Naive thymus-derived CD4-positive, alpha-beta T cell (primary cell): ENCODE measurements at regions of chr6 and their contacts with region 1.

Region 1: GRCh38 chr6:109187399-109188114 is 92.2 kb downstream of the CEP57L1 start:
- DNase-seq: peak; percentile 19 to 68 (median 56)
- ATAC-seq: peak; percentile 91
- H3K4me3 ChIP-seq: no peak overlapping the region
- H3K4me3 Mint-ChIP-seq: no peak overlapping the region
- H3K27ac ChIP-seq: no peak overlapping the region
- H3K27ac Mint-ChIP-seq: no peak overlapping the region
- H3K4me1 ChIP-seq: no peaks in the 10 kb centered on the region
- H3K4me1 Mint-ChIP-seq: peaks cover 0 to 4% (median 0%) of the 10 kb centered on the region in 7 donors
- H3K27me3 ChIP-seq: peaks cover 0 to 3% of the 10 kb centered on the region in 2 donors
- H3K27me3 Mint-ChIP-seq: peaks cover 1 to 45% (median 8%) of the 10 kb centered on the region in 5 donors

Region 2: DNA sequence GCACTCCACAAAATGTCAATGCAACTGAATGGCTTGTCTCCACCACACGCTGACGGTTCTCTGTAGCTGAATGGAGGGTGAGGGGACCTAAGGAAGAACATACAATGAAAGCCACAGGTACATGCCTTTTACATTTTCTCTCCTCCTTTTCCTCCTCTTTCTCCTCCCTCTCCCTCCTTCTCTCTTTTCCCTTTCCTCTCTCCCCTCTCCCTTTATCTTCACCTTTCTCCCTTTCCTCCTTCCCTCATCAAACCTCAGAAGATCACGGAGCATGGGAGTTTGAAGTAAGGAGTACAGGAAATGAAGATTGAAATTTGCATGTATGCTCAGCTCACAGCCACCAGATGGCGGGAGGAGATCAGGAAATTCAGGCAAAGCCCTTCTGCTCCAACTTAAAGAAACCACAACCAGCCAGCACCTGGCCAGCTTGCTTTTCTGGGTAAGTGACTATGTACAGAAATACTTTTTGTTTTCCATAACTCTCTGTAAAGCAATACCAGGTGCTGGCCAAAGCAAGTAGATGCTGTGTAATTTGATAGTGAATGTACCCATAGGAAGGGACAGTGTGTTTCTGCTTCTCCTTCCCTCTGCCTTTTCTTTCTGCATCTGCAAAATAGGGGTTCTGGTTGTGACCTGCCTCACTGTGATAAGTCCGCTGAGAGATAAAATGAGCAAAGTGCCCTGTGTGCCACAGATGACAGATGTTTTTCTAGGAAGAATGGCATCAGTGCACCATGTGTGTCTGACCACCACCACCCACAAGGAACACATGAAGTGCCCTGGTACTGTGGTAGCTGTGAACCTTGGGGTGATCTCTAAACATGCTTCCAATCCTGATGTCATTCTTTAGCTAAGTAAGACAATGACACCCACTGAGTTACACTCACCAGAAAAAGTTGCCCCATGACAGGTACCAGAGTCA is 645.5 kb before region 1 on chr6:
- CTCF ChIA-PET with region 1: no interaction called
- POLR2A ChIA-PET with region 1: no interaction called
- intact Hi-C with region 1: loop called in 1 of 2 experiments (anchors 5 kb)
- DNase-seq: peak in 8 of 9 donors; percentile 41 to 77 (median 70)
- ATAC-seq: peak; percentile 84
- H3K4me3 ChIP-seq: no peak overlapping the region
- H3K4me3 Mint-ChIP-seq: peak overlapping the region in 7 of 10 donors; percentile 2 to 67 (median 31)
- H3K27ac ChIP-seq: no peak overlapping the region
- H3K27ac Mint-ChIP-seq: peak overlapping the region in 1 of 9 donors; percentile 33
- H3K4me1 ChIP-seq: peaks cover 8 to 11% of the 10 kb centered on the region in 2 donors
- H3K4me1 Mint-ChIP-seq: peaks cover 7 to 18% (median 8%) of the 10 kb centered on the region in 7 donors
- H3K27me3 ChIP-seq: no peaks in the 10 kb centered on the region
- H3K27me3 Mint-ChIP-seq: peaks cover 0 to 52% (median 6%) of the 10 kb centered on the region in 5 donors

Region 3: GRCh38 chr6:109440331-109441068 is 252.9 kb after region 1 on chr6 and contains the starts of genes PPIL6 and SMPD2:
- CTCF ChIA-PET with region 1: interaction called, 8 read pairs
- POLR2A ChIA-PET with region 1: interaction called, 3 read pairs
- intact Hi-C with region 1: loop called in 1 of 2 experiments (anchors 5 kb)
- DNase-seq: peak; percentile 63 to 85 (median 77)
- ATAC-seq: peak; percentile 91
- H3K4me3 ChIP-seq: peak within 1 kb of the TSS; percentile 65
- H3K4me3 Mint-ChIP-seq: peak within 1 kb of the TSS; percentile 90 to 95 (median 94)
- H3K27ac ChIP-seq: peak within 1 kb of the TSS; percentile 98
- H3K27ac Mint-ChIP-seq: peak within 1 kb of the TSS; percentile 87 to 97 (median 93)
- H3K4me1 ChIP-seq: peaks cover 11% of the 10 kb centered on the region in 2 donors
- H3K4me1 Mint-ChIP-seq: peaks cover 10 to 32% (median 21%) of the 10 kb centered on the region in 7 donors
- H3K27me3 ChIP-seq: no peaks in the 10 kb centered on the region
- H3K27me3 Mint-ChIP-seq: peaks cover 0 to 2% (median 0%) of the 10 kb centered on the region in 5 donors
- total RNA-seq, gene PPIL6: 0.13 to 1.9 (median 0.40) TPM in 4 of 5 experiments, not detected in the other
- total RNA-seq, gene SMPD2: 16.9 to 33.7 (median 19.6) TPM

Region 4: GRCh38 chr6:109526905-109527628 is 339.5 kb after region 1 on chr6:
- CTCF ChIA-PET with region 1: no interaction called
- POLR2A ChIA-PET with region 1: no interaction called
- intact Hi-C with region 1: loop called (anchors 2 to 5 kb)
- DNase-seq: peak; percentile 7 to 70 (median 59)
- ATAC-seq: peak; percentile 79
- H3K4me3 ChIP-seq: no peak overlapping the region
- H3K4me3 Mint-ChIP-seq: no peak overlapping the region
- H3K27ac ChIP-seq: no peak overlapping the region
- H3K27ac Mint-ChIP-seq: peak overlapping the region in 1 of 9 donors; percentile 86
- H3K4me1 ChIP-seq: no peaks in the 10 kb centered on the region
- H3K4me1 Mint-ChIP-seq: peaks cover 0 to 4% (median 0%) of the 10 kb centered on the region in 7 donors
- H3K27me3 ChIP-seq: no peaks in the 10 kb centered on the region
- H3K27me3 Mint-ChIP-seq: peaks cover 0 to 6% (median 0%) of the 10 kb centered on the region in 5 donors

Region 5: DNA sequence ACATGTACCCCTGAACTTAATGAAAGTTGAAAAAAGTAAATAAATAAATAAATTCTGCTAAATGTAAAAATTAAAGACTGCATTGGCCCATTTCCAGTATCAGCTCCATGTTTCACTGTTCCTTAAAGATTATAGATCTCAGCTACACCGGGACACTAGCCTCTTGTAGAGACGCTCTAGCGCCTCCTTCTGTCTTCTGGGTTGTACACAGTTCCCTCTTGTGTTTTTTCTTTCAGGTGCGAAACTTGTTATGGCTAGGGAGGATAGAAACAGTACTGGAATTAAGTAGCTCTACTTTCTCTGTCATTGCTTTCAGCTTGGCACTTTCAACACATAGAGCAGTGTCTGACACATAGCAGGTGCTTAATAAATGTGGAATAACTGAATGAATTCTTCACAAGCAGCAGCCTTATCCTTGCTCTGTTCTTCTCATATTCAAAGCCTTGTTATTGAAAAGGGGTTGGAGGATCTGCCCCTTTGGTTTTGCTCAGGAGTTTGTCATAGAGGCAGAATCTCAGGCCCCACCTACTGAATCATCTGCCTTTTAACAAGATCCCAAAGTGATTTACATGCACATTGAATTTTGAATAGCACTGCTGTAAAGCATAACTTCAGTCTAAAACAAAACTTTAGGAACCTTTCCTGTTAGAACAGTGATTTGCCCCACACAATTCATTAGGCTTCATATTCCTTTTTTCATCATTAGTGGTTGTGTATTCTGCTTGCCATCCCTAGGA is 595.9 kb after region 1 on chr6:
- CTCF ChIA-PET with region 1: no interaction called
- POLR2A ChIA-PET with region 1: no interaction called
- intact Hi-C with region 1: loop called in 1 of 2 experiments (anchors 5 kb)
- DNase-seq: peak in 1 of 9 donors; percentile 3
- ATAC-seq: no peak
- H3K4me3 ChIP-seq: no peak overlapping the region
- H3K4me3 Mint-ChIP-seq: no peak overlapping the region
- H3K27ac ChIP-seq: no peak overlapping the region
- H3K27ac Mint-ChIP-seq: no peak overlapping the region
- H3K4me1 ChIP-seq: no peaks in the 10 kb centered on the region
- H3K4me1 Mint-ChIP-seq: peaks cover 0 to 5% (median 0%) of the 10 kb centered on the region in 7 donors
- H3K27me3 ChIP-seq: no peaks in the 10 kb centered on the region
- H3K27me3 Mint-ChIP-seq: no peaks in the 10 kb centered on the region

Region 6: GRCh38 chr6:110389689-110390382 is 1202.3 kb after region 1 on chr6:
- CTCF ChIA-PET with region 1: no interaction called
- POLR2A ChIA-PET with region 1: no interaction called
- intact Hi-C with region 1: loop called in 1 of 2 experiments (anchors 5 kb)
- DNase-seq: no peak
- ATAC-seq: peak; percentile 67
- H3K4me3 ChIP-seq: no peak overlapping the region
- H3K4me3 Mint-ChIP-seq: peak overlapping the region in 1 of 10 donors; percentile 32
- H3K27ac ChIP-seq: no peak overlapping the region
- H3K27ac Mint-ChIP-seq: peak overlapping the region in 6 of 9 donors; percentile 7 to 85 (median 54)
- H3K4me1 ChIP-seq: peaks cover 0 to 3% of the 10 kb centered on the region in 2 donors
- H3K4me1 Mint-ChIP-seq: peaks cover 9 to 27% (median 23%) of the 10 kb centered on the region in 7 donors
- H3K27me3 ChIP-seq: no peaks in the 10 kb centered on the region
- H3K27me3 Mint-ChIP-seq: no peaks in the 10 kb centered on the region